HEK293 (cell line): ENCODE measurements at regions of chr7 and their contacts with region 1.

Region 1: GRCh38 chr7:134605973-134606923 is 40.4 kb upstream of the BPGM start:
- H3K4me3 ChIP-seq: no peak overlapping the region
- H3K27ac ChIP-seq: no peak overlapping the region
- H3K4me1 ChIP-seq: no peaks in the 10 kb centered on the region
- CTCF ChIP-seq: peak; percentile 57

Region 2: DNA sequence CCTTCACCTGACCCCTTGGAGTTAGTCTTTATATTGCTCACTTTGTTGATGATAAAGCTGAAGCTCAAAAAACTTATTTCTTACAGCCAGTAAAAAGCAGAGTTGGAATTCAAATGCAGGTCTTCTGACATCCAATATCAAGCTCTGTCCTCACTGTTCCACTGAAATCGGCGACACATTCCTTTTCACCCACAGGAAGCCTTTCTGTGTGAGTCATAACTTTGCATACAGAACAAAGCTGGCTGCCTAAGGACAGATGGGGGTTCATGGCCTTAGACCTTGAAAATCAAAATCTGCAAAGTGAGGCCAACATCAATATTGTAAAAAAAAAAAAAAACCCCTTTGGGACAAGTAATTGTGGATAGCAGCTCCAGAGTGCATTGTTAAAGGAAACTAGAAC is 125.5 kb before region 1 on chr7:
- CTCF ChIA-PET with region 1: interaction called, 10 read pairs
- POLR2A ChIA-PET with region 1: interaction called, 3 read pairs
- H3K4me3 ChIP-seq: no peak overlapping the region
- H3K27ac ChIP-seq: no peak overlapping the region
- H3K4me1 ChIP-seq: no peaks in the 10 kb centered on the region
- CTCF ChIP-seq: no peak

Region 3: GRCh38 chr7:134619627-134620331 is 13.5 kb after region 1 on chr7:
- CTCF ChIA-PET with region 1: interaction called, 15 read pairs
- POLR2A ChIA-PET with region 1: no interaction called
- H3K4me3 ChIP-seq: no peak overlapping the region
- H3K27ac ChIP-seq: no peak overlapping the region
- H3K4me1 ChIP-seq: no peaks in the 10 kb centered on the region
- CTCF ChIP-seq: no peak

Region 4: GRCh38 chr7:134932707-134933370 is 326.6 kb after region 1 on chr7:
- CTCF ChIA-PET with region 1: no interaction called
- POLR2A ChIA-PET with region 1: no interaction called
- H3K4me3 ChIP-seq: no peak overlapping the region
- H3K27ac ChIP-seq: no peak overlapping the region
- H3K4me1 ChIP-seq: no peaks in the 10 kb centered on the region
- CTCF ChIP-seq: no peak